Mammary epithelial cell (primary cell): ENCODE measurements at regions of chr12 and their contacts with region 1.

Region 1: GRCh38 chr12:82685790-82686167 is 927 bp upstream of the TMTC2 start:
- DNase-seq: peak; percentile 87
- H3K4me3 ChIP-seq: peak overlapping the region; percentile 58 to 99 (median 72)
- H3K27ac ChIP-seq: peak overlapping the region; percentile 81
- H3K4me1 ChIP-seq: peaks cover 13% of the 10 kb centered on the region
- H3K27me3 ChIP-seq: no peaks in the 10 kb centered on the region
- CTCF ChIP-seq: peak; percentile 68 to 94

Region 2: GRCh38 chr12:82438356-82438755 is 247.4 kb before region 1 on chr12:
- CTCF ChIA-PET with region 1: no interaction called
- dilution Hi-C with region 1: no loop called
- in situ Hi-C with region 1: no loop called
- intact Hi-C with region 1: no loop called
- DNase-seq: peak; percentile 56
- H3K4me3 ChIP-seq: no peak overlapping the region
- H3K27ac ChIP-seq: peak overlapping the region; percentile 29
- H3K4me1 ChIP-seq: no peaks in the 10 kb centered on the region
- H3K27me3 ChIP-seq: no peaks in the 10 kb centered on the region
- CTCF ChIP-seq: no peak

Region 3: DNA sequence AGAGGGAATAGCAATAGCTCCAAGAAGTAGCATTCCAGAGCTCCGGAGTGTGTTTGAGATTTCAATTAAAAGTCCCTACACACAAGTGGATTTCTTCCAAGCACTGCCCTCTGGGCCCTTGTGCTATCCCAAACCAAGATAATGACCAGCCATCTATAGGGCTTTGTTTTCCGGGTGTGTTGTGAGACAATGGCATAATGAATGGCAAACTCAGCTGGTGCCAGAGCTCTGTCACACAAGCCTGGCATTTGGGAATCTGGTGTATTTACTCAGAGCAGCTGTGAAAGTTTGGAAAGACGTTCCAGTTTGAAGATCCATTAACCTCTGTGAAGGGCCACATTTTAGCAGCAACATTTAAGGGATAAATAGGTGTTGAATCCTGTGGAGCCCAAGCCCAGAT is 60.3 kb before region 1 on chr12:
- CTCF ChIA-PET with region 1: no interaction called
- dilution Hi-C with region 1: no loop called
- in situ Hi-C with region 1: no loop called
- intact Hi-C with region 1: no loop called
- DNase-seq: no peak
- H3K4me3 ChIP-seq: no peak overlapping the region
- H3K27ac ChIP-seq: no peak overlapping the region
- H3K4me1 ChIP-seq: no peaks in the 10 kb centered on the region
- H3K27me3 ChIP-seq: no peaks in the 10 kb centered on the region
- CTCF ChIP-seq: no peak

Region 4: DNA sequence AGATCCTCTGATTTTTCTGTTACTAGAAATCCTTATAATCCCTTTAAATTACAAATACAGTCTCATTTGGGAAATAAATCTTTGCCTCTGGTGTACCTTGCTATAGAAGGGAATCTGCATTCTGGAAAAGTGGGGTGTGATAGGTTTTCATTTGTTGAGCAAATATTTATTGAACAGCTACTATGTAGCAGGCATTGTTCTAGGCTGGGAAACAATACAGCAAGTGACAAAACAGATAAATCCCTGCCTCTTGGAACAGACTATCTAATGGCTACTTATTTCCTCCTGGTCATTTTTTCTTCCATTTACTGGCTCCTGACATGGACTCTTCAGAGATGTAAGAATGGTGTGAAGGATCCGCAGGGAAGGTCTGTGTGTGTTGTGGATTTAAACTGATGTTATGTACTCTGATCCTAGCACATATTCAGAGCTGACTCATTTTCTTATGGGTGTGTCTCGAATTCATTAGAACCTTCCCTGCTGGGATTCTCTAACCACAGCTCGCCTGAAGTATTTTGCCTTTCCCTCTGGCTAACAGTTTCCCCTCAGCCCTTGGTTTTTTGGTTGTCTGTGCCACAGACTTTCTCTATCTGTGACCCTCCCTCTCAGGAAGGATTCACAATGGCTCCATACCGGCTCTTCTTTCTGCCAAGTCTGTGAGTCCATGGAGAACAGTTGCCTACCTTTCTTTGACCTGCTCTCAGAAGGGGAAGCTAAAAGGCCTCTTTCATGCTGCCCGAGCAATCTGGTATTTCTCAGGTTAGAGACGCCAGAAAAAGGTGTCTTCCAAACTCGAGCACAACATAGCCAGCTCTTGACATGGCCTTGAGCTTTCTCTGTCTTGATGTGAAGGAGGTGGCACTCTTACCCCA is 54.6 kb after region 1 on chr12:
- CTCF ChIA-PET with region 1: interaction called, 6 read pairs
- dilution Hi-C with region 1: no loop called
- in situ Hi-C with region 1: no loop called
- intact Hi-C with region 1: loop called (anchors 1 kb)
- DNase-seq: peak; percentile 78
- H3K4me3 ChIP-seq: no peak overlapping the region
- H3K27ac ChIP-seq: peak overlapping the region; percentile 9
- H3K4me1 ChIP-seq: peaks cover 11% of the 10 kb centered on the region
- H3K27me3 ChIP-seq: no peaks in the 10 kb centered on the region
- CTCF ChIP-seq: no peak

Region 5: DNA sequence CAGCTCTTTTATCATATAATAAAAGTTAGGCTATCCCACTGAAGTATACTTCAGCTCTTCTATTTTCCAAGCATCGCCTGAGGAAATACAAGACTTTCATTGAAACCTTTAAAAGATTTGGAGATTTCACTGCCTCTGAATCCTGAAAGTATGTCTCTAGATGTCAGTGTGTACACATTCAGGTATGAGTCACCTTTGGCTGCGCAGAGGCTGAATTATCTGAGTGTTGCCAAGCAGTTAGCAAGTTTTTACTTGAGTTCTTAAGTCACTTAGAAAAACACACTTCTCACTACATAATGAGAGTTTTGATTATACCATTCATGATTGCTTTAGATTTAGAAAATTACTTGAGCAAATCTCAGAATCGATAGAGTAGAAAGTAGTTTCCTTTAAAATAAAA is 211.2 kb after region 1 on chr12:
- CTCF ChIA-PET with region 1: no interaction called
- dilution Hi-C with region 1: no loop called
- in situ Hi-C with region 1: no loop called
- intact Hi-C with region 1: loop called (anchors 5 kb)
- DNase-seq: peak; percentile 81
- H3K4me3 ChIP-seq: no peak overlapping the region
- H3K27ac ChIP-seq: no peak overlapping the region
- H3K4me1 ChIP-seq: peaks cover 7% of the 10 kb centered on the region
- H3K27me3 ChIP-seq: no peaks in the 10 kb centered on the region
- CTCF ChIP-seq: peak in 1 of 2 donors; percentile 30

Region 6: GRCh38 chr12:83389237-83389996 is 703.6 kb after region 1 on chr12:
- CTCF ChIA-PET with region 1: no interaction called
- dilution Hi-C with region 1: no loop called
- in situ Hi-C with region 1: no loop called
- intact Hi-C with region 1: loop called (anchors 2 kb)
- DNase-seq: no peak
- H3K4me3 ChIP-seq: no peak overlapping the region
- H3K27ac ChIP-seq: no peak overlapping the region
- H3K4me1 ChIP-seq: no peaks in the 10 kb centered on the region
- H3K27me3 ChIP-seq: no peaks in the 10 kb centered on the region
- CTCF ChIP-seq: peak; percentile 9 to 35

Region 7: GRCh38 chr12:83823431-83823963 is 1137.7 kb after region 1 on chr12:
- CTCF ChIA-PET with region 1: interaction called, 8 read pairs
- dilution Hi-C with region 1: no loop called
- in situ Hi-C with region 1: no loop called
- intact Hi-C with region 1: loop called (anchors 1 kb)
- DNase-seq: peak; percentile 49
- H3K4me3 ChIP-seq: no peak overlapping the region
- H3K27ac ChIP-seq: no peak overlapping the region
- H3K4me1 ChIP-seq: peaks cover 7% of the 10 kb centered on the region
- H3K27me3 ChIP-seq: no peaks in the 10 kb centered on the region
- CTCF ChIP-seq: peak; percentile 61 to 70

Region 8: GRCh38 chr12:84502907-84503787 is 1817.4 kb after region 1 on chr12:
- CTCF ChIA-PET with region 1: interaction called, 5 read pairs
- dilution Hi-C with region 1: no loop called
- in situ Hi-C with region 1: no loop called
- intact Hi-C with region 1: loop called (anchors 2 kb)
- DNase-seq: peak; percentile 66
- H3K4me3 ChIP-seq: no peak overlapping the region
- H3K27ac ChIP-seq: peak overlapping the region; percentile 10
- H3K4me1 ChIP-seq: peaks cover 19% of the 10 kb centered on the region
- H3K27me3 ChIP-seq: no peaks in the 10 kb centered on the region
- CTCF ChIP-seq: peak; percentile 56 to 59